ENCODE measurements at regions of chr5 and their contacts with region 1.

Region 1: GRCh38 chr5:180831139-180832048 is 28.8 kb upstream of the MGAT1 start:
- DNase-seq: peak; percentile 82
- ATAC-seq: peak; percentile 83
- H3K4me3 Mint-ChIP-seq: peak overlapping the region; percentile 98
- H3K27ac Mint-ChIP-seq: peak overlapping the region; percentile 98
- H3K4me1 Mint-ChIP-seq: peaks cover 54% of the 10 kb centered on the region
- H3K27me3 Mint-ChIP-seq: no peaks in the 10 kb centered on the region
- CTCF ChIP-seq: no peak

Region 2: DNA sequence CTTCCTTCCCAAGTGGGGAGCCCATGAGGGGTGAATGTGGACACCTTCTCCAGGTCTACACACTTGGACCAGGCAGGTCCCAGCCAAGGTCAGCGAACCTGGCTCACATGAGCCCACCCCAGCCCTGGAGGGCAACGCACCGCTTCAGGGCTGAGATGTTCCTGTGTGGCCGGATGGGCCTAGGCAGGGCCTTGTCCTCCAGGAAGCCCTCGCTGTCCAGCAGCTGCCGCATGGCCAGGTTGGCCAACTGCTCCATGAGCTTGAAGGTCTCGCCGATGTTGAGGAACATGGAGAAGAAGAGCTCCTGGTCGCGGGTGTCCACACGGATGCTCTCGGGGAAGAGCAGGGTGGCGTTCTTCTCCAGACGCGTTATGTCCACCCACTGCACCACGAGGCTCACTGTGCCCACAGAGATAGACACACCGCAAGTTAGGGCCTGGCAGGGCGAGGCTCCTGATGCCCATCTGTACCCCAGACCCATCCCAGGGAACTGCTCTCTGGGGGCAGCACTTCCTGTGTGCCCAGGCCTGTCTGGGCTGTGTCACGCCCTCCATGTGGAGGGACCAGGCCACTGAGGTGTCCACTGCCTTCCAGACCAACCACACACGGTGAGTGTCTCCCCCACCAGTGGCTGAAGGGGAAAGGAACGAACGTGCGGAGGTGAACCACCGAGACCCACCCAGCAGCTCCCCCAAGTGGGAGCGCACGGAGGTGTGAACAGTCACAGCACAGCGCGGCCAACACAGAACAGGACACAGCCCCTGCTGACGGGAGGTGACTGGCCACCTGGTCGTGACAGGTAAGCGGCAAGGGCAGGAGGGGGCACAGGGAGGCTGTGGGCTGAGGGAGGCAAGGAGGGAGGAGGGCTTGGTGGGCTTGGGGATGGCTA is 938.1 kb before region 1 on chr5:
- CTCF ChIA-PET with region 1: no interaction called
- POLR2A ChIA-PET with region 1: no interaction called
- intact Hi-C with region 1: no loop called
- DNase-seq: no peak
- ATAC-seq: no peak
- H3K4me3 Mint-ChIP-seq: no peak overlapping the region
- H3K27ac Mint-ChIP-seq: no peak overlapping the region
- H3K4me1 Mint-ChIP-seq: no peaks in the 10 kb centered on the region
- H3K27me3 Mint-ChIP-seq: no peaks in the 10 kb centered on the region
- CTCF ChIP-seq: no peak

Region 3: GRCh38 chr5:180555168-180555921 is 276.0 kb before region 1 on chr5:
- CTCF ChIA-PET with region 1: no interaction called
- POLR2A ChIA-PET with region 1: no interaction called
- intact Hi-C with region 1: no loop called
- DNase-seq: no peak
- ATAC-seq: no peak
- H3K4me3 Mint-ChIP-seq: no peak overlapping the region
- H3K27ac Mint-ChIP-seq: no peak overlapping the region
- H3K4me1 Mint-ChIP-seq: no peaks in the 10 kb centered on the region
- H3K27me3 Mint-ChIP-seq: no peaks in the 10 kb centered on the region
- CTCF ChIP-seq: no peak

Region 4: DNA sequence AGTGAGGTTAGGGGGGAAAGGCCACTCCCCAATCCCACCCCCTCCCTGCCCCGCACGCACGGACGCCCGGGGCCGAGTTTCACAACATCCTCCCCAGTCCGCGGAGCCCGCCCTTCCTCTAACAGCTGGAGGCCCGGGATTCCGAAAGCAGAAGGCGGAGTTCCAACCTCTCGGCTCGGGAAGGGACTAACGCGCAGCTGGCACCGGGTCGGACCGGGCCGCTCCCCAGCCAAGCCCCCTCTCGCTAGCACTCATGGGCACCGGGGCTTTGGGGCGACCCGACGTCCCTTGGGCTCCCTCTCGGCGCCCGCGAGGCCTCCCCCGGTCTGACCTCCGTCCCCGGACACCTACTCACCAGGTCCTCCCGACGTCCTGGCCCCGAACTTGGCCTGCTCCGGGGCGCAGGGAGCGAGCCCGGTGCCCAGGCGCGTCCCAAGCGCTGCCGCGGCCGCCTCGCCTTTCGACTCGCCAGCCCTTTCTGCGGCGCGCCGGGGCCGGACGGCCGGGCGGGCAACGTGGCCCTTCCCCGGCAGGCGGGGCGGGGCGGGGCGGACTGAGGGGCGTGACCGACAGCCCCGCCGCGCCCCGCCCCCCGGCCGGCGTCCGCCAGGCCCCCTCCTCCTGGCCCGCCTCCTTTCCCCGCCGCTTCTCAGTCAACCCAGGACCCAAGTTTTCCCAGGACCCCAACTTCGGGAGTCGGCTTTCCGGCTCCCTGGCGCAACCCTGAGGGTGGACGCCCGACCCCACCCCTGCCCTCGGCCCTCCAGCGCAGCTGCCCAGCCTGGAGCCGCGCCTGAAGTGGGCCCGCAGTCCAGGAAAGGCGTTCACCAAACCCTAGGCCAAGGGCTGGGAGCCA is 28.8 kb before region 1 on chr5 and contains the start of gene MGAT1:
- CTCF ChIA-PET with region 1: interaction called, 8 read pairs
- POLR2A ChIA-PET with region 1: interaction called, 240 read pairs
- intact Hi-C with region 1: loop called (anchors 1 kb)
- DNase-seq: peak; percentile 84
- ATAC-seq: peak; percentile 60
- H3K4me3 Mint-ChIP-seq: peak within 1 kb of the TSS; percentile 91
- H3K27ac Mint-ChIP-seq: peak within 1 kb of the TSS; percentile 91
- H3K4me1 Mint-ChIP-seq: peaks cover 84% of the 10 kb centered on the region
- H3K27me3 Mint-ChIP-seq: no peaks in the 10 kb centered on the region
- CTCF ChIP-seq: no peak
- total RNA-seq, gene MGAT1: 66.9 and 74.5 TPM in 2 replicates

Region 5: GRCh38 chr5:180816608-180817534 is 14.5 kb before region 1 on chr5:
- CTCF ChIA-PET with region 1: interaction called, 4 read pairs
- POLR2A ChIA-PET with region 1: interaction called, 240 read pairs
- intact Hi-C with region 1: no loop called
- DNase-seq: no peak
- ATAC-seq: peak; percentile 33
- H3K4me3 Mint-ChIP-seq: peak overlapping the region; percentile 12
- H3K27ac Mint-ChIP-seq: peak overlapping the region; percentile 25
- H3K4me1 Mint-ChIP-seq: peaks cover 72% of the 10 kb centered on the region
- H3K27me3 Mint-ChIP-seq: no peaks in the 10 kb centered on the region
- CTCF ChIP-seq: no peak

Region 6: DNA sequence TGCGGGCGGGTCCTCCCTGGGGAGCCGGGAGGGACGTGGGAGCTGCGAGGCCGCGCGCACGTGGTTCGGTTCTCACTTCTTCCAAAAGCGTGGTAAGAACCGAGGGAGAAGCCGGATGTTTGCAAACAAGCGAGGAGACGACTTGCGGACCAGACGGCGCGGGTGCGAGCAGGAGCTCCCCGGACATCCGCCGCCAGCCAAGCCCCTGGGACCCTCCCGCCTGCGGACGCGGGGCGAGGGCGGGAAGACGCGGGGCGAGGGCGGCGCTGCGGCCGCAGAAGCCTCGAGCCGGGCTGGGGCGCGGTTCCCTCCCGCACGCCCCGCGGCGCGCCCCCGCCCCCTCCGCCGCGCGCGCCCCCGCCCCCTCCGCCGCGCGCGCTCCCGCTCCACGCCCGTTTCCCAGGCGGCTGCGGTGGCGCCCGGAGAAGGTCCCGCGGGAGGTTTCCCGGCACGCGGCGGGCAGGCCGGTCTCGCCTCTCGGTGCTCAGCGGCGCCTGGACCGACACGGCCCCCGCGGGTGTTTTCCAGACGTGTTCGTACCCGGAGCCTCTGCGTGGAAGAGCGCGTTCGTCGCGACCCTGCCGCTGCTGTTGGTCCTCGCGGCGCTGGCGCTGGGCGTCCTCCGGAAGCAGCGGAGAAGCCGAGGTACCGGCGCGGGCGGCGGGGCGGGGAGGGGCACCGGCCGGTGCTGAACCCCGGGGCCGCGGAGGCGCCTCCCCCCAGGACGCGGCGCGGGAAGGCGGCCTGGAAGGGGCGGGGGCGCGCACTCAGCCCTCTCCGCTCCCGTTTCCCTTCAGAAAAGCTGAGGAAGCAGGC is 221.5 kb after region 1 on chr5:
- CTCF ChIA-PET with region 1: no interaction called
- POLR2A ChIA-PET with region 1: interaction called, 10 read pairs
- intact Hi-C with region 1: no loop called
- DNase-seq: peak; percentile 42
- ATAC-seq: peak; percentile 35
- H3K4me3 Mint-ChIP-seq: peak overlapping the region; percentile 85
- H3K27ac Mint-ChIP-seq: peak overlapping the region; percentile 70
- H3K4me1 Mint-ChIP-seq: peaks cover 46% of the 10 kb centered on the region
- H3K27me3 Mint-ChIP-seq: peaks cover 52% of the 10 kb centered on the region
- CTCF ChIP-seq: no peak

Measured in activated B cell treated with CpG ODN at 0.5 μM for 24 hours (primary cell).